Ascending aorta (tissue), 2 donors: ENCODE measurements at regions of chr22 and their contacts with region 1.

Region 1: GRCh38 chr22:38705235-38706100 is at the start of gene GTPBP1:
- DNase-seq: peak; percentile 98 to 99
- H3K4me3 ChIP-seq: peak within 1 kb of the TSS; percentile 94 to 99
- H3K27ac ChIP-seq: peak within 1 kb of the TSS; percentile 95 to 99
- H3K4me1 ChIP-seq: peaks cover 6 to 20% of the 10 kb centered on the region in 2 donors
- H3K27me3 ChIP-seq: no peaks in the 10 kb centered on the region
- CTCF ChIP-seq: no peak
- total RNA-seq, gene GTPBP1: 89.5 TPM

Region 2: GRCh38 chr22:37849089-37849751 is 856.2 kb before region 1 on chr22 and contains the start of gene EIF3L:
- intact Hi-C with region 1: loop called (anchors 10 kb)
- DNase-seq: peak; percentile 46 to 92
- H3K4me3 ChIP-seq: peak within 1 kb of the TSS; percentile 73 to 77
- H3K27ac ChIP-seq: peak within 1 kb of the TSS; percentile 81 to 91
- H3K4me1 ChIP-seq: peaks cover 16 to 17% of the 10 kb centered on the region in 2 donors
- H3K27me3 ChIP-seq: no peaks in the 10 kb centered on the region
- CTCF ChIP-seq: no peak
- total RNA-seq, gene EIF3L: 256 TPM

Region 3: DNA sequence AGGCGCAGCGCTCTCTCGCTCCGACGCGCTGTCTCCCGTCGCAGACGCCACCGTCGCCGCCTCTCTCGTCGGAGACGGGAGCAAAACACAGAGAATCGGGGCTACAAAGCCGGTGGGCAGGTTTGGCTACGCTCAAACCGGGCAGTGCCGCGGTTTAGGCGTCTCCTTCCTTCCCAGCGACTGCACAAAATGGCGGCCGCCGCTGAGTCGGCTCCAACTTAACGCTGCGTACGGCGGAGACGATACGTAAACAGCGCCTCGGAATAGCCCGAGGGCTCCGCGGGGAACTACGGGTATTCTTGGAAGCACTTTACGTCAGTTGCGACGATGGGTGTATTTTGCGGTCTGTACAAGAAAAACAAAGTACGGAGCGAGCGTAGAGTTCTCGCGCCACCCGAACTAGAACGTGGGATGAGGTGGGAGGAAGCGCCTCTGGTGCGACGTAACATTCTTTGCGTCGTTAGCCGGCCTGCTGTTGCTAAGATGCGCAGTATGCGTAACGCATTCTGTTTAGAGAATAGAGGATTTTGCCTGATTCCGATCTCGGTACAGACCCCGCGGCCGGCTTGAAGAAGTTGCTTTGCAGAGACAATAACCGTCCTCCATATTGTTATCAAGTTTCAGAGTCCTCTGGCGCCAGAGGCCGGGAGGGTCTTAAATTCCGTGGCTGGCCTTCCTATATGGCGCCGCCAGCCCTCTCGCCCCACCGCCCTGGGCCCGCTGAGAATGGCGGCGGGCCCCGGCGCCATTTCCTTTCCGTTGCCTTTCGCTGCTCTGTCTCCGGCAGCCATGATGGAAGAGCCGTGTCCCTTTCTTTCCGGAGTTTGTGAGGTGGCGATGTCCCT is 199.1 kb before region 1 on chr22 and contains the start of gene DDX17:
- intact Hi-C with region 1: loop called (anchors 10 kb)
- DNase-seq: peak; percentile 77 to 97
- H3K4me3 ChIP-seq: peak within 1 kb of the TSS; percentile 77 to 96
- H3K27ac ChIP-seq: peak within 1 kb of the TSS; percentile 100
- H3K4me1 ChIP-seq: peaks cover 3 to 26% of the 10 kb centered on the region in 2 donors
- H3K27me3 ChIP-seq: no peaks in the 10 kb centered on the region
- CTCF ChIP-seq: no peak
- total RNA-seq, gene DDX17: 837 TPM

Region 4: GRCh38 chr22:38718414-38718813 is 12.9 kb after region 1 on chr22:
- intact Hi-C with region 1: loop called (anchors 1 kb)
- DNase-seq: peak in 1 of 2 donors; percentile 88
- H3K4me3 ChIP-seq: no peak overlapping the region
- H3K27ac ChIP-seq: peak overlapping the region; percentile 55 to 68
- H3K4me1 ChIP-seq: peaks cover 0 to 11% of the 10 kb centered on the region in 2 donors
- H3K27me3 ChIP-seq: no peaks in the 10 kb centered on the region
- CTCF ChIP-seq: peak; percentile 49 to 69 (median 65)

Region 5: GRCh38 chr22:38755911-38756532 is 50.6 kb after region 1 on chr22 and contains the start of gene SUN2:
- intact Hi-C with region 1: loop called (anchors 1 kb)
- DNase-seq: peak; percentile 86 to 97
- H3K4me3 ChIP-seq: peak within 1 kb of the TSS; percentile 72 to 79
- H3K27ac ChIP-seq: peak within 1 kb of the TSS; percentile 91 to 98
- H3K4me1 ChIP-seq: peaks cover 17 to 23% of the 10 kb centered on the region in 2 donors
- H3K27me3 ChIP-seq: no peaks in the 10 kb centered on the region
- CTCF ChIP-seq: no peak
- total RNA-seq, gene SUN2: 896 TPM